Activated naive CD8-positive, alpha-beta T cell treated with anti-CD3 and anti-CD28 coated beads, Interleukin-2, amount 10 ng/mL, durations not matched to agents 7 days and 5 days (primary cell): ENCODE measurements at regions of chr11 and their contacts with region 1.

Region 1: DNA sequence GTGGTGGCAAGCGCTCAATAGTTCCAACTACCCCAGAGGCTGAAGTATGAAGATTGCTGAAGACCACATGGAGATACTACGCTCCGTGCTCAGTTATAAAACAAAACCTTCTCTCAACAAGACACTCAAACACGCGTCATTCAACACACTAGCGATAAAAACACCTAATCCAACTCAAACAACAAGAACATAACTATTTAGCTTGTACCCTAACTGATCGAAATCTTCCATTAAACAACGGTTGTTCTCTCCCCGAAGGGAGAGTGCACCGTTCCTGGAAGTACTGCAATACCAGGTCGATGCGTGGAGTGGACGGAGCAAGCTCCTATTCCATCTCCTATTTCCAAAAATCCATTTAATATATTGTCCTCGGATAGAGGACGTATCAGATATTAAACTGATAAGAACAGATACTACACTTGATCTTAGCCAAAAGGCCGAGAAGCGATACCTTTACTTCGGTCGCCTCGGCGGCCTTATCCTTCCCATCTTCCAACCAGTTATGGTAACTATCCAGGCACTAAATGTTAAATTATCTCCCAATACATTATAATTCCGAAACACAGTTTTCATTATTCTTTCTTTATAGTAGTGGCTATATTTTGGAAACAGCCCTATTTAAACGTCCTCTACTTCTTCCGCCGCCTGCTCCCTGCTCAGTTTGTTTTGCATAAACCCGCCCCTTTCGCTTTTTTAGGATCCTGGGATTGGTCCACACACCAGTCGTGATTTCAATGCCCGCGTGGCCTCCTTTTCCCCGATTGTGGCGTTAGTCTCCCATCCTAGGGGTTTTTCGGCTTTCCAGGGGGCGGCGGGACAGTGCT is 2.2 kb upstream of the WDR74 start:
- DNase-seq: peak; percentile 81
- ATAC-seq: peak; percentile 69
- H3K4me3 Mint-ChIP-seq: no peak overlapping the region
- H3K27ac Mint-ChIP-seq: no peak overlapping the region
- H3K4me1 Mint-ChIP-seq: peaks cover 20% of the 10 kb centered on the region
- H3K27me3 Mint-ChIP-seq: no peaks in the 10 kb centered on the region

Region 2: DNA sequence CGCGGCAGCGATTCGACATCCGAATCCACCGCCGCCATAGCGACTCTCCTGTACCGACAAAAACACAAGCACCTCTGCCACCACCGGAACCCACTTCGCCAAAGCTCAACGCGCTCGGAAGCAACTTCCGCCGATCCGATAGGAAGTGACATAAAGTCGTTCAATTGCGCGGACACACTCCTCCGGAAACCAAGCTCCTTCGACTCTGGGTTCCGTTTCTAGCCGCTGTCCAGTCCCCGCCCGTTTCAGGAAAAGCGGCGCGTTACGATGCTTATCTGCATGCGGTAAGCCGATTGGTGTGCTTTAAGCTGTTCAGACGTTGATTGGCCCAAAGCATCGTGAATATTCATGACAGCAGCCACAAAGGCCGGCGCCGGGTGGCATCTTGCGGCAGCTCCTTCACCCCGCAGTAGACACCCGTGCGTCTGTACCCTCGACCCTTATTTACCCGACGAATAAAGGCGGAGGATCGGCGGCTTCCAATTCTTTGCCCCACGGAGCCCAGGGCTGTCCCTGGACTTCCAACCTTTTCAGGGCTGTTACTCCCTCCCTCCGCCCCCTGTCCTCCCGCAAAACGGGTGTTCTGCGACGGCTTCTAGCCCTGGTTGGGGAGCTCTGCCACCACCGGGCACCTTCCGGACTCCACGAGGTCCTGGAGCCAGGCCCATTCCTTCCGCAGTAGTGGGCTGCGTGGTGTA is 250.0 kb before region 1 on chr11 and contains the start of gene TUT1:
- POLR2A ChIA-PET with region 1: interaction called, 41 read pairs
- DNase-seq: peak; percentile 91
- ATAC-seq: peak; percentile 88
- H3K4me3 Mint-ChIP-seq: peak within 1 kb of the TSS; percentile 100
- H3K27ac Mint-ChIP-seq: peak within 1 kb of the TSS; percentile 99
- H3K4me1 Mint-ChIP-seq: peaks cover 38% of the 10 kb centered on the region
- H3K27me3 Mint-ChIP-seq: no peaks in the 10 kb centered on the region
- total RNA-seq, gene TUT1: 27.2 to 38.2 TPM

Region 3: GRCh38 chr11:62665075-62665598 is 176.4 kb before region 1 on chr11 and contains the starts of genes C11orf98 and CSKMT:
- POLR2A ChIA-PET with region 1: interaction called, 32 read pairs
- DNase-seq: peak; percentile 97
- ATAC-seq: peak; percentile 88
- H3K4me3 Mint-ChIP-seq: peak within 1 kb of the TSS; percentile 97
- H3K27ac Mint-ChIP-seq: peak within 1 kb of the TSS; percentile 94
- H3K4me1 Mint-ChIP-seq: peaks cover 34% of the 10 kb centered on the region
- H3K27me3 Mint-ChIP-seq: no peaks in the 10 kb centered on the region
- total RNA-seq, gene C11orf98: 99.9 to 104 TPM
- total RNA-seq, gene CSKMT: 23.3 to 27.3 TPM

Region 4: DNA sequence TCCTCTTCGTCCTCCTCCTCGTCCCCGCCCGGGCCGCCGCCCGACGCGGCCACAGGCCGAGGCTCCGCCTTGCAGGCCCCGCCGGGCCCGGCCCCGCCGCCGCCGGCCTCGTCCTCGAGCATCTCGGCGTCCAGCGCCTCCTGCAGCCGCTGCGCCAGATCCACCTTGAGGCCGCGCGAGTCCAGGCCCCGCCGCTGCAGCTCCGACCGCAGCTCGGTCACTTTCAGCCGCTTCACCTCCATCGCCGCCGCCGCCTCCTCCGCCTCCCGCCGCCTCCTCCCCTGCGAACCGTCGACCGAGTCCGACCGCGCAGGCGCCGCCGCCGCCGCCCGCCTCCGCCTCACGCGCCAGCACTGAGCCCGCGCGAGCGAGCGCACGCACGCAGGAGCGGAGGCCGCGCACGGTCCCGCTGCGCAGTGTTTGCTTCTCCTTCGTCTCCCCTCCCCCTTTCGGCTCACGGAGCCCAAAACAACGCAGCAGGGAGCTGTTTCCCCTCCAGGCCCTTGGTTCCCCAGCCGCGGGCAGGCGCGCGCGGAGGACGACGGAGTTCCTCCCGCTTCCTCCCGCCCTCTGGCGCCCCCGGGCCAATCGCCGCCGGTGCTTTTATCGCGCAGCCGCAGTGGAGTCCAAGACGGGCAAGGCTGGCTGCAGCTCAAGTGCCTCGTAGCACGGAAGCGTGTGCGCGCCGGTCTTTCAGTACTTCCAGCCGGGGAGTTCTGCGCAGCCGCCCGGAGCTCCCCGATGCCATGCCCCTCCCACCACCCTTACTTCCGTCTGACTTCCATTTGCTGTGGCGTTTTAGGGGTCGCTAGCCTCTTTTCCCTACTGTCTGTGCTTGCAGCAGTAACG is 114.4 kb before region 1 on chr11 and contains the start of gene HNRNPUL2:
- POLR2A ChIA-PET with region 1: interaction called, 95 read pairs
- DNase-seq: peak; percentile 99
- ATAC-seq: peak; percentile 89
- H3K4me3 Mint-ChIP-seq: peak within 1 kb of the TSS; percentile 100
- H3K27ac Mint-ChIP-seq: peak within 1 kb of the TSS; percentile 98
- H3K4me1 Mint-ChIP-seq: peaks cover 41% of the 10 kb centered on the region
- H3K27me3 Mint-ChIP-seq: no peaks in the 10 kb centered on the region
- total RNA-seq, gene HNRNPUL2: 67.9 to 72.5 TPM

Region 5: DNA sequence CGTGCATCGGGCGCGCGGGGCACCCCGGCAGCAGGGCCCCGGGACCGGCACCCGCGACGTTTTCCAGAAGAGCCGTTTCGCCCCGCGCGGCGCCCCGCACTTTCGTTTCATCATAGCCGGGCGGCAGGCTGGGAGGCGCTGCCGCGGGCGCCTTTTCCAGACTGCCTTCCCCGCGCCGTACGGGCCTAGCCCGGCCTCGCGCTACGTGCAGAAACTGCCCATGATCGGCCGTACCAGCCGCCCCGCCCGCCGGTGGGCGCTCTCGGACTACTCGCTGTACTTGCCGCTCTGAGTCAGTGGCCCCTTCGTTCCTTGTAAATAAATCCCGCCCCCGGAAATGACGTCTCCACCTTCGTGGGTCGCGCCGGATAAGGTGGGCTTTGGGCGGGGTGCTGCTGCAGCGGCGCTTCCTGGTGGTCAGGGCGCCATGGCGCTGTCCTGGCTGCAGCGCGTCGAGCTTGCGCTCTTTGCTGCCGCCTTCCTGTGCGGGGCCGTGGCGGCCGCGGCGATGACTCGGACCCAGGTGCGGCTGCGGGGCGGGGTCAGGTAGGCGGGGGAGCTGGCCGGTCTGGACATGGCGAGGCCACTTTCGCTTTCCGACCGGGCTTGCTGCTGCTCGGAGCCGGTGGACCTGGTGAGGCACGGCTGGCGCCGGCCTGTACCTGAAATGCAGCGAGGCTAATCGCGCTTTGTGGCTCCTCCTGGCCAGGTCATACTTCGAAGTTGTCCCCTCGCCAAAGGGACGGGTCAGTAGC is 54.4 kb before region 1 on chr11 and contains the start of gene TMEM179B:
- POLR2A ChIA-PET with region 1: interaction called, 247 read pairs
- DNase-seq: peak; percentile 93
- ATAC-seq: peak; percentile 73
- H3K4me3 Mint-ChIP-seq: peak within 1 kb of the TSS; percentile 92
- H3K27ac Mint-ChIP-seq: peak within 1 kb of the TSS; percentile 97
- H3K4me1 Mint-ChIP-seq: peaks cover 38% of the 10 kb centered on the region
- H3K27me3 Mint-ChIP-seq: no peaks in the 10 kb centered on the region
- total RNA-seq, gene TMEM179B: 48.7 to 52.2 TPM

Region 6: GRCh38 chr11:62855571-62856332 is 14.2 kb after region 1 on chr11:
- POLR2A ChIA-PET with region 1: interaction called, 429 read pairs
- DNase-seq: peak; percentile 99
- ATAC-seq: peak; percentile 89
- H3K4me3 Mint-ChIP-seq: peak overlapping the region; percentile 96
- H3K27ac Mint-ChIP-seq: peak overlapping the region; percentile 98
- H3K4me1 Mint-ChIP-seq: peaks cover 45% of the 10 kb centered on the region
- H3K27me3 Mint-ChIP-seq: no peaks in the 10 kb centered on the region

Region 7: GRCh38 chr11:62911137-62912130 is 69.9 kb after region 1 on chr11:
- POLR2A ChIA-PET with region 1: no interaction called
- DNase-seq: no peak
- ATAC-seq: no peak
- H3K4me3 Mint-ChIP-seq: no peak overlapping the region
- H3K27ac Mint-ChIP-seq: no peak overlapping the region
- H3K4me1 Mint-ChIP-seq: peaks cover 4% of the 10 kb centered on the region
- H3K27me3 Mint-ChIP-seq: peaks cover 12% of the 10 kb centered on the region

Region 8: DNA sequence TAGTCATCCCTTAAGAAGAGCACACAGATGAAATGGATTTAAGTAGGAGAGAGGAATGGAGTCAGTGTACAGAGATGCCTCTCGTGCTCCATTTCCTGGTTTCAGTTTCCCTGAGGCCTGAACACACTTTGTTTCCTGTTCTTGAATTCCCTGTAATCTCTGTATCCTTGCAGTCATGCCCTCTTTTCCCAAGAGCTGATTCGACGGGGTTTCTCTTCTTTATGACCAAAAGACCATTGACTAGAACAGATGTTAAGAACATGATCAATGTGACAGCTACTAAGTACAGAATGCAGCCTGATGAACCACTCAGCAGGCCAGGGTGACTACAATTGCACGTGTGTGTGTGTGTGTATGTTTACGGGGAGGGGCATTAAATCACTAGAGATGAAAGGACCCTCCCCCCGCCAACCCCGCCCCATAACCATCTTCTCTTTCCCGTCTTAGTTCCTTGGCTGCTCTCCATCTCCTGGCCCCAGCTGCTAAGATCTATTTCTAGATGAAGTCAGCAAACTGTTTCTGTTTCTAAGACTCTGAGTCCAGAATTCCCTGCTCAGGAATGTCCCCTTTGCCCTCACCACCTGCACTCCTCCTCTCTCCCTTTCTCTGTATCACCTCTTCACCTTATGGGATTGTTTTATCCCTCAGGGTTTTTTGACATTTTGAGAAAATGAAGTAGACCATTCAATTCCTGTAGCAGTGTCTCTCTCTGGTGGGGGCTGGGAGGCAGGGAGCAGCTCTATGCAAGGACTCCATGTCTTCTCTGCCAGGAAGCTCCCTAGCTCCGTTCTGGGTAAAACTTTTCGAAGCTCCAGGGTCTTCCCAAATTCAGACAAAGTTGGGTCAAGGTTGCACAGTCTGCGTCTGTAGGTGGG is 117.2 kb after region 1 on chr11:
- POLR2A ChIA-PET with region 1: no interaction called
- DNase-seq: no peak
- ATAC-seq: no peak
- H3K4me3 Mint-ChIP-seq: no peak overlapping the region
- H3K27ac Mint-ChIP-seq: no peak overlapping the region
- H3K4me1 Mint-ChIP-seq: no peaks in the 10 kb centered on the region
- H3K27me3 Mint-ChIP-seq: peaks cover 11% of the 10 kb centered on the region

Region 9: DNA sequence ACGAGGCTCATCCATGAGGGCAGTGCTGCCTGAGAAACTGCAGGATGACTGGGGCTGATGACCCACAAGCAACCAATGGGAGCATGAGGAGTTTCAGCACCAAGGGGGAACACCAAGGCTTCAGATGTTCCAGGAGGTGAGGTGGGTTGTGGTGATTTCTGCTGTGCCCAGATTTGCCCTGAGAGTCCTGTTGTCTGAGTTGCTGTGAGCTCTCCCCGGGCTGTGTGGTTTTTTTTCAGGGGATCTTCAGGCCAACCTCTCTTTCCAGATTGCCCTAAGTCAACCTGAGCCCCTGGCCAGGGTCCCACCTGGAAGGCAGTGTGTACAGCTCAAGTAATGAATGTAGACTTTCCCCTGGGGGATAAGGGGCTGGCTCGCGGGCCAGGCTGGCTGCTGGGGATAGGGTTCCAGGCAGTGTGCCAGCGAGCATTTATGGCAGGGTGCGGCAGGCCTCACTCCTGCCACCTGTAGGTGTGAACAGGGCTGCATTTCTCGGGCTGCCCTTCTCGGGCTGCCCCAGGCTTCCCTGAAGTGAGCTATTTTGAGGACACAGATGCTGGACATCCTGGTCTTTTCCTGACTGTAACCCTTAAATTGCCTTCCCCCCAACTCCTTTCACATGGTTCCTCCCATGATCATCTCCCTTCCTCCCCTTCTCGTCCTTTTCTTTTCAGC is 133.4 kb after region 1 on chr11:
- POLR2A ChIA-PET with region 1: no interaction called
- DNase-seq: no peak
- ATAC-seq: no peak
- H3K4me3 Mint-ChIP-seq: no peak overlapping the region
- H3K27ac Mint-ChIP-seq: no peak overlapping the region
- H3K4me1 Mint-ChIP-seq: peaks cover 2% of the 10 kb centered on the region
- H3K27me3 Mint-ChIP-seq: peaks cover 26% of the 10 kb centered on the region

Region 10: GRCh38 chr11:64185816-64186498 is 1344.4 kb after region 1 on chr11 and contains the start of gene STIP1:
- POLR2A ChIA-PET with region 1: interaction called, 10 read pairs
- DNase-seq: peak; percentile 95
- ATAC-seq: peak; percentile 92
- H3K4me3 Mint-ChIP-seq: peak within 1 kb of the TSS; percentile 99
- H3K27ac Mint-ChIP-seq: peak within 1 kb of the TSS; percentile 100
- H3K4me1 Mint-ChIP-seq: peaks cover 38% of the 10 kb centered on the region
- H3K27me3 Mint-ChIP-seq: no peaks in the 10 kb centered on the region
- total RNA-seq, gene STIP1: 218 to 219 TPM